ENCODE measurements at regions of chr1 and their contacts with region 1.

Region 1: DNA sequence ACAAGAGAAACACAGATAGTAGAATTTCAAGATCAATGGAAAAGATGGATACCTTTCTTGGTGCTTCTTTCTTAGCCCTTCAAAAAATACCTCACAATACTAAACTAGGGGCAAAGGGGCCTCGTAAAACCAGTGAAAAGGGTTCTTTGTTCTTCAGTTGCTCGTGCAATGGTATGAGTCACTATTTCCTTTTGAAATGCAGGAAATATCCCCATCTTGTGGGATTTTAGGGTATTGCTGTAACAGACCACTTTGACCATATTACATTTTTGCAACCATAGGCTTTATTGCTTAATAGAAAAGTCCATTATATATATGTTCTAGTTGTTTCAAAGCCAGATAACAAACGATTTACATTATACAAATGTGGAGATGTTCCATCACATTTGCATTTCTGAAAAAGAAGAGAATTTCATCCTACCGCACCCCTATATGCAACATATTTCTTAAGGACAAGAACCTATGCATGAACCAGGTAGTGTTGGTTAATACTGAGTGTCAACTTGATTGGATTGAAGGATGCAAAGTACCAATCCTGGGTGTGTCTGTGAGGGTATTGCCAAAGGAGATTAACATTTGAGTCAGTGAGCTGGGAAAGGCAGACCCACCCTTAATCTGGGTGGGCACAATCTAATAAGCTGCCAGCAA is 88.6 kb upstream of the PKN2 start:
- DNase-seq: peak in 7 of 9 donors; percentile 2 to 39 (median 23)
- ATAC-seq: peak; percentile 61
- H3K4me3 ChIP-seq: no peak overlapping the region
- H3K4me3 Mint-ChIP-seq: no peak overlapping the region
- H3K27ac ChIP-seq: no peak overlapping the region
- H3K27ac Mint-ChIP-seq: no peak overlapping the region
- H3K4me1 ChIP-seq: no peaks in the 10 kb centered on the region
- H3K4me1 Mint-ChIP-seq: no peaks in the 10 kb centered on the region
- H3K27me3 ChIP-seq: no peaks in the 10 kb centered on the region
- H3K27me3 Mint-ChIP-seq: peaks cover 0 to 20% (median 12%) of the 10 kb centered on the region in 5 donors

Region 2: GRCh38 chr1:87953732-87954344 is 641.6 kb before region 1 on chr1:
- CTCF ChIA-PET with region 1: no interaction called
- POLR2A ChIA-PET with region 1: no interaction called
- intact Hi-C with region 1: loop called in 1 of 2 experiments (anchors 10 kb)
- DNase-seq: peak; percentile 7 to 54 (median 36)
- ATAC-seq: peak; percentile 70
- H3K4me3 ChIP-seq: no peak overlapping the region
- H3K4me3 Mint-ChIP-seq: no peak overlapping the region
- H3K27ac ChIP-seq: no peak overlapping the region
- H3K27ac Mint-ChIP-seq: no peak overlapping the region
- H3K4me1 ChIP-seq: no peaks in the 10 kb centered on the region
- H3K4me1 Mint-ChIP-seq: no peaks in the 10 kb centered on the region
- H3K27me3 ChIP-seq: no peaks in the 10 kb centered on the region
- H3K27me3 Mint-ChIP-seq: peaks cover 4 to 25% (median 8%) of the 10 kb centered on the region in 5 donors

Region 3: GRCh38 chr1:88104236-88104635 is 491.2 kb before region 1 on chr1:
- CTCF ChIA-PET with region 1: no interaction called
- POLR2A ChIA-PET with region 1: no interaction called
- intact Hi-C with region 1: no loop called
- DNase-seq: no peak
- ATAC-seq: no peak
- H3K4me3 ChIP-seq: no peak overlapping the region
- H3K4me3 Mint-ChIP-seq: no peak overlapping the region
- H3K27ac ChIP-seq: no peak overlapping the region
- H3K27ac Mint-ChIP-seq: no peak overlapping the region
- H3K4me1 ChIP-seq: no peaks in the 10 kb centered on the region
- H3K4me1 Mint-ChIP-seq: no peaks in the 10 kb centered on the region
- H3K27me3 ChIP-seq: no peaks in the 10 kb centered on the region
- H3K27me3 Mint-ChIP-seq: peaks cover 0 to 14% (median 0%) of the 10 kb centered on the region in 5 donors

Region 4: GRCh38 chr1:88180449-88181108 is 414.9 kb before region 1 on chr1:
- CTCF ChIA-PET with region 1: no interaction called
- POLR2A ChIA-PET with region 1: no interaction called
- intact Hi-C with region 1: loop called in 1 of 2 experiments (anchors 1 kb)
- DNase-seq: peak in 8 of 9 donors; percentile 2 to 49 (median 40)
- ATAC-seq: peak; percentile 84
- H3K4me3 ChIP-seq: no peak overlapping the region
- H3K4me3 Mint-ChIP-seq: no peak overlapping the region
- H3K27ac ChIP-seq: no peak overlapping the region
- H3K27ac Mint-ChIP-seq: no peak overlapping the region
- H3K4me1 ChIP-seq: no peaks in the 10 kb centered on the region
- H3K4me1 Mint-ChIP-seq: no peaks in the 10 kb centered on the region
- H3K27me3 ChIP-seq: no peaks in the 10 kb centered on the region
- H3K27me3 Mint-ChIP-seq: peaks cover 3 to 15% (median 7%) of the 10 kb centered on the region in 5 donors

Region 5: DNA sequence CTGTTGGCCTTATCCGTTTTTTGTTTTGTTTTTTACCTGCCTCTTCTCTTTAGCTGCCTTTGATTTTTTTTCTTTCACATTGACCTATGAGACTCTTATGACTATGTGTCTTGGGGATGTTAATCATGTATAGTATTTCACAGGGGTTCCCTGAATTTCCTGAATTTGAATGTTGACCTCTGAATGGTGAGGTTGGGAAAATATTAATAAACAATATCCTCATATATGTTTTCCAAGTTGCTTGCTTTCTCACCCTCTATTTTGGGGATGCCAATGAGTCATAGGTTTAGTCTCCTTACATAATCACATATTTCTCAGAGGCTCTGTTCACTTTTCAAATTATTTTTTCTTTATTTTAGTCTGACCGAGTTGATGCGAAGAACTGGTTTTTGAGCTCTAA is 647.6 kb after region 1 on chr1:
- CTCF ChIA-PET with region 1: no interaction called
- POLR2A ChIA-PET with region 1: no interaction called
- intact Hi-C with region 1: no loop called
- DNase-seq: no peak
- ATAC-seq: no peak
- H3K4me3 ChIP-seq: no peak overlapping the region
- H3K4me3 Mint-ChIP-seq: no peak overlapping the region
- H3K27ac ChIP-seq: no peak overlapping the region
- H3K27ac Mint-ChIP-seq: no peak overlapping the region
- H3K4me1 ChIP-seq: peaks cover 0 to 4% of the 10 kb centered on the region in 2 donors
- H3K4me1 Mint-ChIP-seq: peaks cover 11 to 40% (median 23%) of the 10 kb centered on the region in 7 donors
- H3K27me3 ChIP-seq: no peaks in the 10 kb centered on the region
- H3K27me3 Mint-ChIP-seq: no peaks in the 10 kb centered on the region

Measured in naive thymus-derived CD4-positive, alpha-beta T cell (primary cell).